ENCODE measurements at regions of chr2 and their contacts with region 1.

Region 1: GRCh38 chr2:174465327-174465726 is 21.5 kb downstream of the GPR155 start:
- DNase-seq: no peak
- H3K4me3 Mint-ChIP-seq: no peak overlapping the region
- H3K27ac Mint-ChIP-seq: no peak overlapping the region
- H3K4me1 Mint-ChIP-seq: peaks cover under 1% of the 10 kb centered on the region
- H3K27me3 Mint-ChIP-seq: no peaks in the 10 kb centered on the region

Region 2: DNA sequence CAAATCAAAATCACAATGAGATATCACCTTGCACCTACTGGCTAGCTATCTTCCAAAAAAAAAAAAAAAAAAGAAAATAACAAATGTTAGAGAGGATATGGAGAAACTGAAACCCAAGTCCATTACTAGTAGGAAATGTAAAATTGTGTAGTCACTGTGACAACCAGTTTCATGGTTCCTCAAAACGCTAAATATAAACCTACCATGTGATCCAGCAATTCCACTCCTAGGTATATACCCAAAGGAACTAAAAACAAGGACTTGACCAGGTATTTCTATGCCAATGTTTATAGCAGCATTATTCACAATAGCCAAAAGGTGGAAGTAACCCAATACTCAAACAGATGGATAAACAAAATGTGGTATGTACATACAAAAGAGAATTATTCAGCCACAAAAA is 81.5 kb before region 1 on chr2:
- CTCF ChIA-PET with region 1: no interaction called
- DNase-seq: no peak
- H3K4me3 Mint-ChIP-seq: no peak overlapping the region
- H3K27ac Mint-ChIP-seq: no peak overlapping the region
- H3K4me1 Mint-ChIP-seq: no peaks in the 10 kb centered on the region
- H3K27me3 Mint-ChIP-seq: no peaks in the 10 kb centered on the region

Region 3: DNA sequence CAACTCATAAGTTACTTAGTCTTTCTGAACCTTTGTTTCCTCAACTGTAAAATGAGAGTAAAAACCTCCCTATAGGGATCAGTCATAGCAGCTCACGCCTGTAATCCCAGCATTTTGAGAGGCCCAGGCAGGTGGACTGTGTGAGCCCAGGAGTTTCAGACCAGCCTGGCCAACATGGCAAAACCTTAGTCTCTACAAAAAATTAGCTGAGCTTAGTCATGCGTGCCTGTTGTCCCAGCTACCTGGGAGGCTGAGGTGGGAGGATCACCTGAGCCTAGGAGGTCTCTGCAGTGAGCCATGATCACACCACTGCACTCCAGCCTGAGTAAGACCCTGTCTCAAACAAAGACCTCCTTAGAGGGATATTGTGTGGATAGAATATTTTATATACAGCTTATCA is 19.2 kb after region 1 on chr2:
- CTCF ChIA-PET with region 1: interaction called, 11 read pairs
- DNase-seq: no peak
- H3K4me3 Mint-ChIP-seq: peak overlapping the region; percentile 91
- H3K27ac Mint-ChIP-seq: no peak overlapping the region
- H3K4me1 Mint-ChIP-seq: peaks cover 58% of the 10 kb centered on the region
- H3K27me3 Mint-ChIP-seq: no peaks in the 10 kb centered on the region

Region 4: GRCh38 chr2:174516501-174517378 is 51.4 kb after region 1 on chr2:
- CTCF ChIA-PET with region 1: interaction called, 53 read pairs
- DNase-seq: no peak
- H3K4me3 Mint-ChIP-seq: no peak overlapping the region
- H3K27ac Mint-ChIP-seq: no peak overlapping the region
- H3K4me1 Mint-ChIP-seq: peaks cover 24% of the 10 kb centered on the region
- H3K27me3 Mint-ChIP-seq: peaks cover 3% of the 10 kb centered on the region

Region 5: GRCh38 chr2:174546581-174547506 is 81.5 kb after region 1 on chr2:
- CTCF ChIA-PET with region 1: interaction called, 132 read pairs
- DNase-seq: peak; percentile 66
- H3K4me3 Mint-ChIP-seq: no peak overlapping the region
- H3K27ac Mint-ChIP-seq: no peak overlapping the region
- H3K4me1 Mint-ChIP-seq: peaks cover 7% of the 10 kb centered on the region
- H3K27me3 Mint-ChIP-seq: no peaks in the 10 kb centered on the region

Region 6: GRCh38 chr2:174603280-174603679 is 138.0 kb after region 1 on chr2:
- CTCF ChIA-PET with region 1: interaction called, 16 read pairs
- DNase-seq: peak; percentile 68
- H3K4me3 Mint-ChIP-seq: no peak overlapping the region
- H3K27ac Mint-ChIP-seq: peak overlapping the region; percentile 65
- H3K4me1 Mint-ChIP-seq: peaks cover 90% of the 10 kb centered on the region
- H3K27me3 Mint-ChIP-seq: no peaks in the 10 kb centered on the region

Region 7: DNA sequence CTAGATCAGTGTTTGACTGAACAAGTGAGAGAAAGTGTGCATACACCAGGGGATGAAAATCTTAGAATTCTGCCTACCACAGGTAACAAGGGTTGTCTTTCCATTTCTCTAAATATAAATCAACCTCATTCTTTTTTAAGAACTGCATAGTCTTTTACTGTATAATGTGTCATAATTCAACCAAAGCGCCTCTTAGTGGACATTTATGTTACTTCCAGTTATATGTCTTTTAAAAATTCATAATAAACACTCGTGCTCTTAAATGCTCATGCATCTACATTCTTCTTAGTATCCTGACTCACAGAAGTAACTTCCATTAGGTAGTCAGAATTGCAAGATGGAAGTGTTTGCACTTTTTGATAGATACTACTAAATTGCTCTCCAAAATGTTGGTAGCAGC is 222.8 kb after region 1 on chr2:
- CTCF ChIA-PET with region 1: interaction called, 58 read pairs
- DNase-seq: no peak
- H3K4me3 Mint-ChIP-seq: no peak overlapping the region
- H3K27ac Mint-ChIP-seq: no peak overlapping the region
- H3K4me1 Mint-ChIP-seq: peaks cover 24% of the 10 kb centered on the region
- H3K27me3 Mint-ChIP-seq: peaks cover 19% of the 10 kb centered on the region

Measured in activated naive CD4-positive, alpha-beta T cell treated with anti-CD3 and anti-CD28 coated beads, Interleukin-2, amount 10 ng/mL, durations not matched to agents 7 days and 5 days (primary cell).